ENCODE measurements at regions of chr14 and their contacts with region 1.

Region 1: GRCh38 chr14:101887219-101887618 is 77.2 kb upstream of the DYNC1H1 start:
- H3K4me3 ChIP-seq: no peak overlapping the region
- H3K27ac ChIP-seq: no peak overlapping the region
- H3K4me1 ChIP-seq: no peaks in the 10 kb centered on the region
- CTCF ChIP-seq: no peak

Region 2: DNA sequence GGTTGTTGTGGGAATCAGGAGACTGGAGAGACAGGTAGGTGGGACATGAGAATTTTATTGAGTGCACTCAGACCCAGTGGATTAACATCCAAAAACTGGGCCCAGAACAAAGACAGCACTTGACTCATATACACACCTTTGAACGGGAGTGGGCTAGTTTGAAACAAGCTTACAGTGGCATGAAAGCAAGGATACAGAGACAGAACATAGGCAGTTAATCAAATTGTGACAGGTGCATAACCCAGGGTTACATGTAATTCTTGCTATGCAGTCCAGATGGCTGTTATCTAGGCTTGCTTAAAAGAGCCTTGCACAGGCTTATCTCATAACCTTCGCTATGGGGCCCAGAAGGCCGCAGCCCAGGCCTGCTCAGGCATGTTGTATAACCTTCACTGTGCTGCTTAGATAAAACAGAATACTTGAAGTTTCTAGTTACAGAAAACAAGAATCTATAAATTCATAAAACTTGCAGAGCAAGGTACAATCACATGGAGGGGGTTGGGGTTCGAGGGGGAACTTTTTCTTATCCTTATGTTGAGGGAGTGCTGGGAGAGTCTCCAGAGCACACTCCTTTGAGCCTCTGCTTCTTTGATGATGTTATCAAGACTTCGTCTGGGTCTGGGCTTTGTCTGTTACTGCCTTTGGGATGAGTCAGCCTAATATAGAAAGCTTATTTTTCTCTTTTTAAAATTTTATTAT is 1317.8 kb after region 1 on chr14:
- CTCF ChIA-PET with region 1: no interaction called
- POLR2A ChIA-PET with region 1: interaction called, 12 read pairs
- H3K4me3 ChIP-seq: no peak overlapping the region
- H3K27ac ChIP-seq: no peak overlapping the region
- H3K4me1 ChIP-seq: no peaks in the 10 kb centered on the region
- CTCF ChIP-seq: no peak

Measured in HEK293 (cell line).